ENCODE measurements at regions of chr15 and their contacts with region 1.

Region 1: DNA sequence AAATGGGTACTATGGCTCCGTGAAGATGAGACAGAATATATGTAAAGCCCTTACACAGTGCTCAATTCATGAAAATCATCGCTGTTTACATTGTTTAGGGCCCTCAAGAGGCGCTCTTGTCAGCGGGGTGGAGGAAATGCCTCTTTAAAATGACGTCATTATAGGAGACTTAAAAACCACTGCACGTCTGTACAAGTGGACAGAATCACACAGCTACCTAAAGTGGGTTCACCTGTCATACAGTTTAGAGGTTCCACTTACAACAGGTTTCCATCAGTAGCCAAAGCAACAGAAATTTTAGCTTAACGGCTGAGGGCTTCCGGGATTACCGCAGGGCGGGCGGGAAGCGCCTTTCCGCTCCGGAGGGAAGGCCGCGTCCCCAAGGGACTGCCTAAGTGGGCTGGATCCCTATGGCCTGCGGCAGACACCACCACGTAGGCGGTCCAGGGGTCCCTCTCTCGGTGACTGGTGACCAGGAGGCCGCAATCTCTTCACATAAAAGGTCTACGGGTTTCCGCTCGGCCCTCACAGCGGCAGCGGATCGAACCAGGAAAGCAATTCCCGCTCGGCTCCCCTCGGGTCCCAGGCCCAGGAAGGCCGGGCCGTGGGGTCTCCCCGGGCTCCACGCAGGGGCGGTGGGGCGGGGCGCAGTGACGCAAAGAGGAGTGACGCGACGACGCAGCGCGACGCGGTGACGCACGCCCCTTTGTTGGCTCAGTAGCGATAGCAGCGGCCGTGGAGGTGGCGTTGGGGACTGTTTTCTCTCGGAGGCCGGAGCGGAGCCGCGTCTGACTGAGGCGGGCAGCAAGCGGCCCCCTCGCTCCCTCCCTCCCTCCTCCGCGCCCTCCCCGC is at the start of gene ARIH1:
- DNase-seq: peak; percentile 93 to 97 (median 96)
- H3K4me3 ChIP-seq: peak within 1 kb of the TSS; percentile 64 to 78
- H3K4me3 Mint-ChIP-seq: peak within 1 kb of the TSS; percentile 94 to 99 (median 97)
- H3K27ac ChIP-seq: peak within 1 kb of the TSS; percentile 100
- H3K27ac Mint-ChIP-seq: peak within 1 kb of the TSS; percentile 97 to 100 (median 99)
- H3K4me1 ChIP-seq: peaks cover 48% of the 10 kb centered on the region
- H3K4me1 Mint-ChIP-seq: peaks cover 29 to 64% (median 43%) of the 10 kb centered on the region in 4 donors
- H3K27me3 ChIP-seq: no peaks in the 10 kb centered on the region
- H3K27me3 Mint-ChIP-seq: no peaks in the 10 kb centered on the region
- total RNA-seq, gene ARIH1: 203 to 210 TPM

Region 2: GRCh38 chr15:72231066-72231846 is 242.6 kb before region 1 on chr15 and contains the start of gene PKM:
- CTCF ChIA-PET with region 1: interaction called, 4 read pairs
- POLR2A ChIA-PET with region 1: interaction called, 26 read pairs
- intact Hi-C with region 1: loop called (anchors 1 kb)
- DNase-seq: peak; percentile 88 to 90 (median 89)
- H3K4me3 ChIP-seq: peak within 1 kb of the TSS; percentile 68 to 92
- H3K4me3 Mint-ChIP-seq: peak within 1 kb of the TSS; percentile 95 to 99 (median 98)
- H3K27ac ChIP-seq: peak within 1 kb of the TSS; percentile 96
- H3K27ac Mint-ChIP-seq: peak within 1 kb of the TSS; percentile 94 to 100 (median 97)
- H3K4me1 ChIP-seq: peaks cover 42% of the 10 kb centered on the region
- H3K4me1 Mint-ChIP-seq: peaks cover 35 to 70% (median 50%) of the 10 kb centered on the region in 4 donors
- H3K27me3 ChIP-seq: no peaks in the 10 kb centered on the region
- H3K27me3 Mint-ChIP-seq: peaks cover 0 to 4% of the 10 kb centered on the region in 2 donors
- total RNA-seq, gene PKM: 378 to 383 TPM

Region 3: DNA sequence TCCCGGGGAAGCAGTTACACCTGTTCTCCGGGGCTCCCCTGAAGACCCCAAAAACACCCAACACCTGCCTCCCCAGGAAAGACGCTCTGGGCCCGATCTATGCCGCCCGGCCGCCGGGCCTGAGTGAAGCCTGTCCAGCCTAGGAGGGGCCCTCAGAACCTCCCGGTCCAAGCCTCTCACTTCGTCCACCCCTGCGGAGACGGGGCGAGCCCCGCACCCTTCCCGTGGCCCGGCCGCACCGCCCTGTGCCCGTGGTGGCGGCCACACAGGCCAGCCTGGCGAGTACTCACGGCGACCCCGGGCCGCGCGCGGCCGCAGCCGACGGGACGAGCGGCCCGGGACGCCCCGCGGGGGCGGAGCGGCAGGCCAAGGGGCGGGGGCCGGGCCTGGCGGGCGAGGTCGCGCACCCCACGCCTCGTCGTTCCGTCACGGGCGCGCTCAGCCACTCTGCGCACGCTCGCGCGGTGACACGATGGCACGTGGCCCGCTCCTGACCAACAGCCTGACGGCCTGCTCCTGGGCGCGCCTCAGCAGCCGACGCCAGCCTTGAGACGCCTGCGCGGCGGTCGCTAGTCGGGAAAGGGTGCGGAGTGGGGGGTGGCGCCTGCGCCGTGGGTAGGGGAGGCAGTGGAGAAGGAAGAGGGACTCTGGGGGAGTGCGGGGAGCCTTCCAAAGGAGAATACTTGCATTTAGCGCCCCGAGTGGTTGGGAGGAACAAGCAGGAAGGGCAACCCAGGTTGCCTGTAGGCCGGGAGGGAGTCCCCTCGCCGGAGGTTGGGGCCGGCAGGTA is 201.4 kb before region 1 on chr15 and contains the start of gene PARP6:
- CTCF ChIA-PET with region 1: no interaction called
- POLR2A ChIA-PET with region 1: interaction called, 16 read pairs
- intact Hi-C with region 1: loop called (anchors 2 kb)
- DNase-seq: peak; percentile 98 to 100 (median 100)
- H3K4me3 ChIP-seq: peak within 1 kb of the TSS; percentile 26 to 65
- H3K4me3 Mint-ChIP-seq: peak within 1 kb of the TSS; percentile 85 to 93 (median 88)
- H3K27ac ChIP-seq: peak within 1 kb of the TSS; percentile 87
- H3K27ac Mint-ChIP-seq: peak within 1 kb of the TSS; percentile 93 to 97 (median 95)
- H3K4me1 ChIP-seq: peaks cover 34% of the 10 kb centered on the region
- H3K4me1 Mint-ChIP-seq: peaks cover 27 to 43% (median 36%) of the 10 kb centered on the region in 4 donors
- H3K27me3 ChIP-seq: no peaks in the 10 kb centered on the region
- H3K27me3 Mint-ChIP-seq: no peaks in the 10 kb centered on the region
- total RNA-seq, gene PARP6: 111 TPM

Region 4: DNA sequence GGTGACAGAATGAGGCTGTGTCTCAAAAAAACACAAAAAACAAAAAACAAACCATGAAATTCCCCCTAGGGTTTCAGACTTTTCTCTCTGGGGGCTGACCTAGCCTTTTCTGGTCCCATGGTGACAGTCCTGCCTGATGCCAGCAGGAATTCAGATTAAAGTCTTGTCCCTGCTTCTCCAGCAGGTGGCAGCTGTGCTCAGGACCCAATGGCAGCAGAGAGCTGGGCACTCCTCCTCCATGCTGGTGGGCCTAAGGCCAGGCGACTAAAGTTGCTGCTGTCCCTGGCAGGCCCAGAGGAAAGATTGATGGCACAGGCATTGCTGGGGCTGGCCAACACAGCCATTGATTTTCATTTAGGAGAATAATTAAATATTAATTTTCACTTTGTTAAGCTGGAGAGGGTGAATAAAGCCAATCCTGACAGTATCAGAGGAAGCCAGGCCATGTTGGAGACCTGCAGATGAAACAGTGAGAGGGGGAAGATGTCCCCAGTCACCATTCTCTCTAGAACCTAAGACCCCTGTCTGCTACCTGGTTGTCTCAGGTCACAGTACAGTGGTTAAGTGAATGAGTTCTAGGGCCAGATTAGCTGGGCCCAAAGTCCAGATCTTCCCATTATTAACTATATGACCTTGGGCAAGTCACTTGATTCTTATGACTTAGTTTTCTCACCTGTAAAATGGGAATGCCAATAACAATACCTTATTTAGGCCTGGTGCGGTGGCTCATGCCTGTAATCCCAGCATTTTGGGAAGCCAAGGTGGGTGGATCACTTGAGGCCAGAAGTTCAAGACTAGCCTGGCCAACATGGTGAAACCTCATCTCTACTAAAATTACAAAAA is 161.0 kb before region 1 on chr15:
- CTCF ChIA-PET with region 1: interaction called, 3 read pairs
- POLR2A ChIA-PET with region 1: no interaction called
- intact Hi-C with region 1: loop called (anchors 10 kb)
- DNase-seq: peak; percentile 50 to 57 (median 53)
- H3K4me3 ChIP-seq: no peak overlapping the region
- H3K4me3 Mint-ChIP-seq: no peak overlapping the region
- H3K27ac ChIP-seq: no peak overlapping the region
- H3K27ac Mint-ChIP-seq: peak overlapping the region in 2 of 7 donors; percentile 23 to 45
- H3K4me1 ChIP-seq: no peaks in the 10 kb centered on the region
- H3K4me1 Mint-ChIP-seq: peaks cover 0 to 8% (median 3%) of the 10 kb centered on the region in 4 donors
- H3K27me3 ChIP-seq: no peaks in the 10 kb centered on the region
- H3K27me3 Mint-ChIP-seq: no peaks in the 10 kb centered on the region

Region 5: DNA sequence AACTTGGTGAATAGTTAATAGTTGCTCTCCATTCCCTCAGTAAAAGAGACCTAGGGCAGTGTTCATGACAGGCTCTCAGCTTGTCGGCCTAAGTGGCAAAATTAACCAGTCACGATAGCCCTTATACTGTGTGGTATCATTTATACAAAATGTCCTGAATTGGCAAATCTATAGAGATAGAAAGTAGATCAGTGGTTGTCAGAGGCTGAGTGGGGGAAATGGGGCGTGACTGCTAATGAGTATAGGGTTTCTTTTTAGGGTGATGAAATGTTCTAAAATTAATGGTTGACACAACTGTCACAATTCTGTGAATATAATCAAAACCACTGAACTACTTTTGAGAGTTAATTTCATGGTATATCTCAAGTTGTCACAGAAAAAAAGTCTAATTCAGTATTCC is 21.2 kb after region 1 on chr15:
- CTCF ChIA-PET with region 1: interaction called, 3 read pairs
- POLR2A ChIA-PET with region 1: interaction called, 3 read pairs
- intact Hi-C with region 1: loop called (anchors 2 kb)
- DNase-seq: no peak
- H3K4me3 ChIP-seq: no peak overlapping the region
- H3K4me3 Mint-ChIP-seq: peak overlapping the region in 2 of 8 donors; percentile 28 to 35
- H3K27ac ChIP-seq: no peak overlapping the region
- H3K27ac Mint-ChIP-seq: peak overlapping the region in 1 of 7 donors; percentile 39
- H3K4me1 ChIP-seq: peaks cover 73% of the 10 kb centered on the region
- H3K4me1 Mint-ChIP-seq: peaks cover 48 to 89% (median 73%) of the 10 kb centered on the region in 4 donors
- H3K27me3 ChIP-seq: no peaks in the 10 kb centered on the region
- H3K27me3 Mint-ChIP-seq: no peaks in the 10 kb centered on the region

Region 6: GRCh38 chr15:72532991-72533601 is 59.3 kb after region 1 on chr15:
- CTCF ChIA-PET with region 1: interaction called, 4 read pairs
- POLR2A ChIA-PET with region 1: interaction called, 4 read pairs
- intact Hi-C with region 1: loop called (anchors 2 kb)
- DNase-seq: peak in 4 of 5 donors; percentile 22 to 29 (median 28)
- H3K4me3 ChIP-seq: no peak overlapping the region
- H3K4me3 Mint-ChIP-seq: peak overlapping the region in 1 of 8 donors; percentile 46
- H3K27ac ChIP-seq: no peak overlapping the region
- H3K27ac Mint-ChIP-seq: peak overlapping the region in 1 of 7 donors; percentile 69
- H3K4me1 ChIP-seq: peaks cover 37% of the 10 kb centered on the region
- H3K4me1 Mint-ChIP-seq: peaks cover 33 to 78% (median 49%) of the 10 kb centered on the region in 4 donors
- H3K27me3 ChIP-seq: no peaks in the 10 kb centered on the region
- H3K27me3 Mint-ChIP-seq: no peaks in the 10 kb centered on the region

Region 7: GRCh38 chr15:72685925-72686794 is 212.3 kb after region 1 on chr15 and contains the starts of genes BBS4 and HIGD2B:
- CTCF ChIA-PET with region 1: no interaction called
- POLR2A ChIA-PET with region 1: no interaction called
- intact Hi-C with region 1: loop called (anchors 10 kb)
- DNase-seq: peak; percentile 81 to 86 (median 83)
- H3K4me3 ChIP-seq: peak within 1 kb of the TSS; percentile 95 to 97
- H3K4me3 Mint-ChIP-seq: peak within 1 kb of the TSS; percentile 94 to 99 (median 98)
- H3K27ac ChIP-seq: peak within 1 kb of the TSS; percentile 76
- H3K27ac Mint-ChIP-seq: peak within 1 kb of the TSS; percentile 88 to 99 (median 97)
- H3K4me1 ChIP-seq: peaks cover 15% of the 10 kb centered on the region
- H3K4me1 Mint-ChIP-seq: peaks cover 10 to 21% (median 16%) of the 10 kb centered on the region in 4 donors
- H3K27me3 ChIP-seq: no peaks in the 10 kb centered on the region
- H3K27me3 Mint-ChIP-seq: no peaks in the 10 kb centered on the region
- total RNA-seq, gene BBS4: 19.1 to 22.2 TPM
- total RNA-seq, gene HIGD2B: 0.39 to 0.41 TPM

Measured in CD4-positive, alpha-beta memory T cell (primary cell).